ENCODE measurements at regions of chr1 and their contacts with region 1.

Region 1: DNA sequence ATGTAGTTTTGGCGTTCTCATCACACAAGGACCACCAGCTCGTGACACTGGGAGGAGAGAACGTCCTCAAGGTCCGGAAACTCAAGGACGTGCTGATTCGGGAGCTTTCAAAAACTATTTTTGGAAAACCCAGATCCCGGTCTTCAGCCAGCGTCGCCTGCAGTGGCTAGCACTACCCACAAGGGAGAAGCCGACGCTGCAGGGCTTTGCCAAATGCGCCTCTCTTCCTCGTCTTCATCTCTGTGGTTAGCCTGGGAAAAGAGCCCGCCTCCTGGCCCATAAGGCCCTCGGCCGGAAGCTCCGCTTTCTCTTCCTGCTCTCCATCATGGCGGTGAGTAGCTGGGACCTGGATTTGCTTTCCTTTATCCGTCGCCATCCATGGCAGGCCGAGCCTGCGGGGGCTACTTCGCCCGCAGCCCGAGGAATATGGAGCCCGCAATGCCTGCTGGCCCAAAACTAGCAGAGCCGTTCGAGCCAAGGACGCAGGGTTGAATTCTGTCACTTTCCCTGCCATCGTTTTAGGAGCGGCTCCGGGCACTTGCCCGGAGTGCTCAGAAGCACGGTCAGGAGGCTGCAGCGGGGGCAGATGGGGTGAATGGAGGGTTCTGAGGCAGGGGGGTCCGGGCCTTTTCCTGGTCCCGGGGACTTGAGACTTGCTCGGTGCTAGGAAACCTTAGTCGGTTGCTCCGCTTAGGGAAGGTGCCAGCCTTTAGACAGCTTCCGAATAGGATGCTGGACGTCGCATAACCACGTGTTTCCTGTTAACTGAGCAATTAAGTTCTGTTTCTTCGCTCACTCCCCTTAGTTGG is at the start of gene RPL11:
- DNase-seq: peak; percentile 97
- ATAC-seq: peak; percentile 99
- H3K4me3 ChIP-seq: peak within 1 kb of the TSS; percentile 95
- H3K27ac ChIP-seq: peak within 1 kb of the TSS; percentile 47
- H3K4me1 ChIP-seq: peaks cover 21% of the 10 kb centered on the region
- H3K27me3 ChIP-seq: no peaks in the 10 kb centered on the region
- CTCF ChIP-seq: peak; percentile 66
- total RNA-seq, gene RPL11: 1,031 and 1,441 TPM in 2 replicates

Region 2: GRCh38 chr1:23745515-23745914 is 53.8 kb after region 1 on chr1:
- CTCF ChIA-PET with region 1: no interaction called
- POLR2A ChIA-PET with region 1: interaction called, 22 read pairs
- intact Hi-C with region 1: no loop called
- DNase-seq: peak; percentile 52
- ATAC-seq: no peak
- H3K4me3 ChIP-seq: peak overlapping the region; percentile 88
- H3K27ac ChIP-seq: no peak overlapping the region
- H3K4me1 ChIP-seq: peaks cover 18% of the 10 kb centered on the region
- H3K27me3 ChIP-seq: no peaks in the 10 kb centered on the region
- CTCF ChIP-seq: peak; percentile 47

Region 3: GRCh38 chr1:23759277-23759676 is 67.6 kb after region 1 on chr1:
- CTCF ChIA-PET with region 1: no interaction called
- POLR2A ChIA-PET with region 1: no interaction called
- intact Hi-C with region 1: no loop called
- DNase-seq: no peak
- ATAC-seq: no peak
- H3K4me3 ChIP-seq: no peak overlapping the region
- H3K27ac ChIP-seq: no peak overlapping the region
- H3K4me1 ChIP-seq: no peaks in the 10 kb centered on the region
- H3K27me3 ChIP-seq: no peaks in the 10 kb centered on the region
- CTCF ChIP-seq: no peak